GM10248 (cell line): ENCODE measurements at regions of chr1 and their contacts with region 1.

Region 1: GRCh38 chr1:111603979-111604378 is 15.6 kb upstream of the RAP1A start:
- DNase-seq: peak; percentile 39
- CTCF ChIP-seq: no peak

Region 2: DNA sequence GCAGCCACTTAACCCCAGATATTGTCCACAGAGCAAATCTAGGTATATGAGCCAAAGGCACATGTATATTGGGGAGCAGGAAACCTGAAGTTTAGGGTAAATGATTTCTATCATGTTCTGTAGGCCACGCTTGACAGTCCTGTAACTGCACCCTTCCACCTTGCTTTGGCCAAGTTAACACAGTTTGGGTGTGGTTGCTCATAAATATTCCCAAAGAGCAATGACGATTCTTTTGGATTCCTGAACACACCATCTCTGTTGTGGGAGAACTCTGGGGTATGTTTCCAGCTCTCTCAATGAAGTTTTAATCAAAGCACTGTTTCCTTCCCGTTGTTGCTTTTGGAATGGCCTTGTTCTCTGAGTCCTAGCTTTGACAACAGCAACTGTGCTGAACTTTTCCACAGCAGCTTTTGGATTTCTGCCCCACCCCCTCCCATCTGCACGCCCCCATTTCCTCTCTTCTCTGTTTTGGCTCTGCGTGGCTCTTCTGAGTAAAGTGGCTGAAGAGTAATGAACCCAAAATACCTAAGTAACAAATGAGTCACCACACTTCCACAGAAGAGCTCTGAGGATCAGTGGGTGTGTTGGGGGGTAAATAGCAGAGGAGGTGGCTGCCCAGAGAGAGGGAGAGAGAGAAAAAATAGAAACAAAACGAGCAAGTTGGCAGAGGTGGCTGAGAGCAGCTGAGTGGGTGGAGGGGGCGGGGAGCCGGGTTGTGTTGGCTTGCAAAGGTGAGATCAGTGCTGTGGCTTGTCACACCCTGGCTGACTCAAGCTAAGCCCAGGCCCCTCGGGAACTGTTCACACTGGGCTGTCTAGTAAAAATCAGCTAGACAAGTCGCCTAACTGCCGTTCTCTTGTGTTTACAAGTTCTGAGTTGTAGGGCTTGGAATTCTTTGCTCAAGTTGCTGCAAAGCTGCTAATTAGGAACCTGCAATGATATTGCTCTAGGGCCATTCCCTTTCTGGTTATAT is 11.3 kb before region 1 on chr1:
- CTCF ChIA-PET with region 1: interaction called, 14 read pairs
- POLR2A ChIA-PET with region 1: interaction called, 4 read pairs
- DNase-seq: peak; percentile 71
- CTCF ChIP-seq: no peak

Region 3: GRCh38 chr1:111619635-111620440 is 15.9 kb after region 1 on chr1 and contains the start of gene RAP1A:
- CTCF ChIA-PET with region 1: interaction called, 19 read pairs
- POLR2A ChIA-PET with region 1: interaction called, 8 read pairs
- DNase-seq: peak; percentile 95
- CTCF ChIP-seq: no peak